ENCODE measurements at regions of chr16 and their contacts with region 1.

Region 1: DNA sequence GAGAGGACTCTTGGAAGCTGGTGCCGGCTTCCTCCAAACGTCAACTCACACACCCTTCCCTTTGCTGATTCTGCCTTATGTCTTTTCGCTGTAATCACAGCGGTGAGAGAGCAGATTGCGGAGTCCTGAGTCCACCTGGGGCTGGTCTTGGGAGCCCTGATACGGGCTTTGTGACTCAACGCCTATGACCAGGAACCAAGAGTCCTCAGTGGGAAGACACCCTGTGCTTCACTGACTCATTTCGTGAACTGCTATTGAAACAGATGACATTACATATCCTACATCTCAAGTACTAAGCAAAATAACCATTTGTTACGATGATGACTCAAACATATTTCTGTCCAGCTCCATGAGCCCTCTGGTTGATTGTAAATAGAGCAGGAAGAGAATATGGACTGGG is 90.7 kb upstream of the CREBBP start:
- DNase-seq: peak; percentile 5
- ATAC-seq: no peak

Region 2: DNA sequence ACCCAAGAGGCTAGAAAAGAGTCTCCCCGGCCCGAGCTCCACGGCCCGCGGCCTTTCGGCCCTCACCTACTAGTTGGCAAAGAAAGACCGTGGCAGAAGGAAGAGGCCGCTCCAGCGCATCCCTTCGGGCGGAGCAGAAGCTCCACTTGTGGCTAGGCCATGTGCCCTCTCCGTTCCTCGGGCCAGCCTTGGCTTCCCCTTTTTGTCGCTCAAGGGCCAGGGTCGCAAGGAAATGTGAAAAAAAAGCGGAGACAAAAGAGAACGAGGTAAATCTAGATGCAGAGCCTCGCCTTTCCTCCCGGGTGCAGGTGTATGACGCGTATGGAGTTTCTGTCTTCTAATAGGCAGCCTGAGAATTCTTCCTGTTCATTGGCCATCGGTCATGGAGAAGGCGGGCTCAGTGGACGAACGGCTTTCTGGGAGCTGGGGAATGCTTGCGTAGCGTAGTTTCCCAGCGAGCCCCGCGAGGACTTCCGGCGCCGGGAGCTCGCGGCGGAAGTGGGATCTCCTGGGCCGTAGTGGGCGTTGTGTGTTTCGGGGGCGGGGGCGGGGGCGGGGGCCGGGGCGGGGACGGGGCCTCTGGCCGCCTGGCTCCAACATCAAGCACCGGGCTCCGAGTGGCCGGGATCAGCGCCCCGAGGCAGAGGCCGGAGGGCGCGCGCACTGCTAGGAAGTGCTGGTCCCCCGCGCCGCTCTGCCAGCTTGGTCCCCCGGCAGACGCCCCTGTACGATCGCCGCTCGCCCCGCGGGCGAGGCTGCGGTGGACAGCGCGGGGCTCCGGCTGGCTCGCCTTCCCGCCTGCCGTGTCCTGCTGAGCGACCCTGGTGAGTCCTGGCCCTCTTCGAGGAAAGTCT is 836.5 kb before region 1 on chr16 and contains the start of gene ZNF213:
- intact Hi-C with region 1: no loop called
- DNase-seq: peak; percentile 96
- ATAC-seq: peak; percentile 96
- total RNA-seq, gene ZNF213: 6.1 TPM

Region 3: DNA sequence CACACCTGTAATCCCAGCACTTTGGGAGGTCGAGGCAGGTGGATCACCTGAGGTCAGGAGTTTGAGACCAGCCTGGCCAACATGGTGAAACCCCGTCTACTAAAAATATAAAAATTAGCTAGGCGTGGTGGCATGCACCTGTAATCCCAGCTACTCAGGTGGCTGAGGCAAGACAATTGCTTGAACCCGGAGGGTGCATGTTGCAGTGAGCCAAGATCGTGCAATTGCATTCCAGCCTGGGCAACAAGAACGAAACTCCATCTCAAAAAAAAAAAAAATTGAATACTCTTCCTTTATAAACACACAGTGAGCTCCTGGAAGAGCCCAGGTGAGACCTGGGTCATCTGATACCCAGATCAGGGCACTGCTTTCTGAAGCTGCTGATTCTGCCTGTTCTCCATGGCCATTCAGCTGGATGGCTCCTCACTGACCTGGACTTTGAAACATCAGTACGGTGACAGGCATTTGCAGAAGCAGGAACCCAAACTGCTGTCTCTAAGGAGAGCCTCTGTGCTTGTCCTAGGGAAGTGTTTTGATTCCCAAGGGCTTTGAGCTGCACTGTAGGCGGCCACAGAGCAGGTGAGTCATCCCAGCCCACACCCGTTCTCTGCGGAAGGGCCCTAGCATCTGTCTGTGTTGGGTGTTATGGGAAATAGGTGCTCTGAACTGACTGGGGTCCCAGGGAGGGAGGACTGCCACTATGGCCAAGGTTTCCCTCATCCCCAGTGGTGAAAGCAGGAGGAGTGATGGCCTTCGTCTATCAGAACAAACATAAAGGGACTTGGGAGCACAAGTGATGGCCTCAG is 205.6 kb after region 1 on chr16:
- intact Hi-C with region 1: loop called (anchors 10 kb)
- DNase-seq: no peak
- ATAC-seq: no peak